ENCODE measurements at regions of chr1 and their contacts with region 1.

Region 1: DNA sequence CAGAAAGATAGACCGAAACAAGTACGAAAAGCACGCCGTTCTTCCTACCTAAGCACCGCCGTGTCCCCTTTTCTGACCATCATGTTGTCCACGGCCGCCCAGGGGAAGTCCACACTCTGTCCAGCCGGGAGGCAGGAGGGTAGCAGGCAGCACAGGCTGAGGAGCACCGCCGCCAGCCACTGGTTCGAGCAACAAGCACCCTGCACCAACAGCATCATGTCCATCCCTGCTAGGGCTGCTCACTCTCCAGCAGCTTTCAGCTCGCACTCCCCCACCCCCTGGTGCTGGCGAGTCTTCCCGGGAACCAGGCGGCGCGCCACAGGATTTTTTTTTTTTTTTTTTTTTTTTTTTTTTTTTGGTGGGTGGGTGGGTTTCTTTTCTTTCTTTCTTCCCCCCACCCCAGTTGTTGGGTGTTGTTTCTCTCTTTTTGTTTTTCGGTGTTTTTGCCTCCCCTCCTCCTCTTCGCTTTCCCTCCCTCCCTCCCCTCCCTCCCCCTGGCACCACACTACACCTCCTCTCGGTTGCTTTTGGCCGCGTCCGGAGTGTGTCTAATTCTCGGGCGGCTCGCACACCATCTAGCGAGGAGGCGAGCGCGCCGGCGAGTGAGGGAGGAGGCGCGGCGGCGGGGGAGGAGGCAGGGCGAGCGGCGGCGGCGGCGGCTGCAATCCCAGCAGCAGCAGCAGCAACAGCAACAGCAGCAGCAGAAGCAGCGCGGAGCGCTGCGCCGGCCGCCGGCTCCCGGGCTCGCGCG is at the start of gene NEGR1:
- DNase-seq: peak; percentile 94
- ATAC-seq: peak; percentile 90
- total RNA-seq, gene NEGR1: 15.2 TPM

Region 2: DNA sequence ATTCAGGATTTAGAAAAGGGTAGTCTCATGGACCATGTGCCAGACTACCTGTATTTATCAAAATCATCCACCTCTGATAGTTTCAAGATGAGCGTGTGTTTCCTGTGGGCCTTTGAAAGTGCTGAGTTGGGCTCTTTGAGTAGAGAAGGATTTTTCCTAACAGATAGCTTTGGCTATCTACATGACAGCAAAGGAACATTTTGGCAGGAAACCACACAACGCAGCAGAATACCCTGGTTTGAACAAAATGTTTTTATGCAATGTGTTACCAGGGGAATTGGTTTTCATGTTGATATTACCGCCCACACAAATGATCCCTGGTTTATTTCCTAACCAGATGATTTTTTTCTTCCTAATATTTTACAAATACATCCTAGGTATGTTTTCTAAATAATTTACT is 431.5 kb before region 1 on chr1:
- intact Hi-C with region 1: loop called (anchors 10 kb)
- DNase-seq: no peak
- ATAC-seq: peak; percentile 90

Region 3: DNA sequence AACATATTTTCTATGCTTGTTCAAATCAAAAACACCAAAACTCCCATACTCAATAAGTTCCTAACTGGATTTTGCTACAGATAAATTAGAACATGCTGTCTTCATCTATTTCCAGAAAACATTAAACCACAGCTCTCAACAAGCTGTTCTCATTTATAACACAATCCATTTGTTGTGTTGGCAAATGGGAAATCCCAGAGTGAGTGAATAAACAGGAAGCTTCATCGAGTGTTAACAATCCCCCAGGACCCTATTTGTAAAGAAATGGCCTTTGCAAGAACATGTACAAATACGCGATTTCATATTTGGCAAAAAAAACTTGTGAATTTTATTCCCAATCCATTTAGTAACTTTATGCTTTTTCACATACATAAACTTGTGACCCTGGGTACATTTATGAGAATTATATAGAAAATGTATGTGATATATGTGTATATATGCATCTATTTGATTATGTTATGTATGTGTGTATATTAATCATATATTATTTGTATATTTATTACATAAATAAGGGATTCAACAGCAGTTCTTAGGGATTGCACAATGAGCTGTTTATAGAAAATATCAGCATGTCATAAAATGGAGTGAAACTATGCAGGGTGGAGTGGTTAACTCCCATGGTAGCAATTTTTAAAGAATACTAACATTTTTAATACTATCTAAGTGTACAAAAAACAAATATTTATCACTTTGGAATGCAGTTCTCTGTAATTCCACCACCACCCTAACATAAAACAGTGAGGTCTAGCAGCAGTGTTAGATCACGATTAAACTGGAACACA is 160.2 kb before region 1 on chr1:
- intact Hi-C with region 1: loop called (anchors 10 kb)
- DNase-seq: no peak
- ATAC-seq: peak; percentile 94

Region 4: GRCh38 chr1:72241397-72241796 is 41.0 kb before region 1 on chr1:
- intact Hi-C with region 1: no loop called
- DNase-seq: no peak
- ATAC-seq: no peak

Region 5: GRCh38 chr1:72485801-72486200 is 203.4 kb after region 1 on chr1:
- intact Hi-C with region 1: no loop called
- DNase-seq: no peak
- ATAC-seq: no peak

Measured in Right ventricle myocardium inferior (tissue), 1 donor.